ENCODE measurements at regions of chr9 and their contacts with region 1.

Region 1: GRCh38 chr9:131733541-131734061 is 6.3 kb downstream of the RAPGEF1 start:
- DNase-seq: no peak
- ATAC-seq: no peak
- H3K4me3 ChIP-seq: no peak overlapping the region
- H3K27ac ChIP-seq: peak overlapping the region; percentile 60
- H3K4me1 ChIP-seq: peaks cover 99% of the 10 kb centered on the region
- H3K27me3 ChIP-seq: no peaks in the 10 kb centered on the region
- CTCF ChIP-seq: no peak
- EP300 ChIP-seq: no peak
- POLR2A ChIP-seq: no peak
- RAD21 ChIP-seq: no peak

Region 2: DNA sequence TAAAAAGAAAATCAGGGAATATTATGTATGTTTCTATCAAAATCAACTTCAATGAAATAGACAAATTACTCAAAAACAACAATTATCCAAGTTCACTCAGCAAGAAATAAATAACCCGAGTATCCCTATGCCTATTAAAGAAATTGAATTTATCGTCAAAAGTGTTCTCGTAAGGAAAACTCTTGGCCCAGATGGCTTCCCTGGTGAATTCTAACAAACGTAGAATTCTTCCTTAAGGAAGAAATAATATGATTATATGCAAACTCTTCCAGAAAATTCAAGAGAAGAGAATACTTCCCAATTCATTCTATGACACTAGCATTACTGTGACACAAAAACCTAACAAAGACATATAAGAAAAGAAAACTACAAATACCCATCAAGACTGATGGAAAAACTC is 487.0 kb before region 1 on chr9:
- CTCF ChIA-PET with region 1: no interaction called
- POLR2A ChIA-PET with region 1: no interaction called
- in situ Hi-C with region 1: no loop called
- intact Hi-C with region 1: no loop called
- DNase-seq: no peak
- ATAC-seq: no peak
- H3K4me3 ChIP-seq: no peak overlapping the region
- H3K27ac ChIP-seq: no peak overlapping the region
- H3K4me1 ChIP-seq: no peaks in the 10 kb centered on the region
- H3K27me3 ChIP-seq: peaks cover 0 to 7% of the 10 kb centered on the region in 2 experiments; a peak in 2 of 5 replicates
- CTCF ChIP-seq: no peak
- EP300 ChIP-seq: no peak
- POLR2A ChIP-seq: no peak
- RAD21 ChIP-seq: no peak

Region 3: GRCh38 chr9:131635285-131635684 is 98.3 kb before region 1 on chr9:
- CTCF ChIA-PET with region 1: interaction called, 4 read pairs
- POLR2A ChIA-PET with region 1: interaction called, 3 read pairs
- in situ Hi-C with region 1: no loop called
- intact Hi-C with region 1: loop called (anchors 1 kb)
- DNase-seq: peak; percentile 80
- ATAC-seq: peak; percentile 93
- H3K4me3 ChIP-seq: no peak overlapping the region
- H3K27ac ChIP-seq: no peak overlapping the region
- H3K4me1 ChIP-seq: peaks cover 16% of the 10 kb centered on the region
- H3K27me3 ChIP-seq: no peaks in the 10 kb centered on the region
- CTCF ChIP-seq: peak; percentile 25; the same call in 1 of the 2 replicates
- EP300 ChIP-seq: no peak
- POLR2A ChIP-seq: no peak
- RAD21 ChIP-seq: no peak

Region 4: GRCh38 chr9:131704141-131704983 is 29.2 kb before region 1 on chr9:
- CTCF ChIA-PET with region 1: no interaction called
- POLR2A ChIA-PET with region 1: interaction called, 4 read pairs
- in situ Hi-C with region 1: no loop called
- intact Hi-C with region 1: loop called (anchors 2 kb)
- DNase-seq: no peak
- ATAC-seq: no peak
- H3K4me3 ChIP-seq: no peak overlapping the region
- H3K27ac ChIP-seq: peak overlapping the region; percentile 79
- H3K4me1 ChIP-seq: peaks cover 59% of the 10 kb centered on the region
- H3K27me3 ChIP-seq: no peaks in the 10 kb centered on the region
- CTCF ChIP-seq: no peak
- EP300 ChIP-seq: no peak
- POLR2A ChIP-seq: no peak
- RAD21 ChIP-seq: no peak

Region 5: DNA sequence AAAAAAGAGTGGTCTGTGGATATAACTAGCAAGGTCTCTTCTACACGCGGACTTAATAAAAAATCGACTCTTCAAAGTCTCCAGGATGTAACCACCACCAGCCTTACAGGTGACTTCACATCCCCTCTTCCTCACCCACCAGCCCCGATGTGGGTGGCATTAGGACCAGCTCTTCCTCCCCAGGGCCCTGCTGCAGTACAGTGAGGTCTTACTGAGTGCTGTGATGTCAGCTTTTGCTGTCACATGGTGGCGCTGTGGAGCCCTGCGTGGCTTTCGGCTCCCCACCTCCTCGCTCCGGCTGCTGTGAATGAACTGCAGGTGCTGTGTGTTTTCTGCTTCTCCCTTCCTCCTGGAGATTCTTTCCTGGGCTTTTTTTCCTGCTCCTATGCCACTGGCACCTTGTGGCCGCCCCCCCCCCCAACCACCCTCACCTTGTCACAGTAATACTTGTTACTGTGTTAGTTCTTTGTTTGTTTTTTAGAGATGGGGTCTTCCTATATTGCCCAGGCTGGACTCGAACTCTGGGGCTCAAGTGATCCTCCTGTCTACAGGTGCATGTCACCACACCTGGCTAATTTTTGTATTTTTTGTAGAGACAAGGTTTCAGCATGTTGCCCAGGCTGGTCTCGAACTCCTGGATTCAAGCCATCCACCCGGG is 22.1 kb after region 1 on chr9:
- CTCF ChIA-PET with region 1: no interaction called
- POLR2A ChIA-PET with region 1: no interaction called
- in situ Hi-C with region 1: no loop called
- intact Hi-C with region 1: no loop called
- DNase-seq: peak; percentile 74
- ATAC-seq: peak; percentile 99
- H3K4me3 ChIP-seq: no peak overlapping the region
- H3K27ac ChIP-seq: no peak overlapping the region
- H3K4me1 ChIP-seq: no peaks in the 10 kb centered on the region
- H3K27me3 ChIP-seq: peaks cover 2 to 26% of the 10 kb centered on the region in 2 experiments; a peak in 4 of 5 replicates
- CTCF ChIP-seq: peak; percentile 89
- EP300 ChIP-seq: no peak
- POLR2A ChIP-seq: no peak
- RAD21 ChIP-seq: peak; percentile 22; the same call in 1 of the 2 replicates

Region 6: GRCh38 chr9:131815971-131816873 is 82.6 kb after region 1 on chr9:
- CTCF ChIA-PET with region 1: no interaction called
- POLR2A ChIA-PET with region 1: no interaction called
- in situ Hi-C with region 1: no loop called
- intact Hi-C with region 1: no loop called
- DNase-seq: no peak
- ATAC-seq: peak; percentile 50
- H3K4me3 ChIP-seq: no peak overlapping the region
- H3K27ac ChIP-seq: no peak overlapping the region
- H3K4me1 ChIP-seq: no peaks in the 10 kb centered on the region
- H3K27me3 ChIP-seq: peaks cover 7 to 47% of the 10 kb centered on the region in 2 experiments; a peak in 4 of 5 replicates
- CTCF ChIP-seq: no peak
- EP300 ChIP-seq: no peak
- POLR2A ChIP-seq: no peak
- RAD21 ChIP-seq: no peak

Measured in HepG2 (cell line).